Activated CD8-positive, alpha-beta T cell treated with anti-CD3 and anti-CD28 coated beads, Interleukin-2, amount 10 ng/mL, durations not matched to agents 7 days and 5 days (primary cell): ENCODE measurements at regions of chr20 and their contacts with region 1.

Region 1: DNA sequence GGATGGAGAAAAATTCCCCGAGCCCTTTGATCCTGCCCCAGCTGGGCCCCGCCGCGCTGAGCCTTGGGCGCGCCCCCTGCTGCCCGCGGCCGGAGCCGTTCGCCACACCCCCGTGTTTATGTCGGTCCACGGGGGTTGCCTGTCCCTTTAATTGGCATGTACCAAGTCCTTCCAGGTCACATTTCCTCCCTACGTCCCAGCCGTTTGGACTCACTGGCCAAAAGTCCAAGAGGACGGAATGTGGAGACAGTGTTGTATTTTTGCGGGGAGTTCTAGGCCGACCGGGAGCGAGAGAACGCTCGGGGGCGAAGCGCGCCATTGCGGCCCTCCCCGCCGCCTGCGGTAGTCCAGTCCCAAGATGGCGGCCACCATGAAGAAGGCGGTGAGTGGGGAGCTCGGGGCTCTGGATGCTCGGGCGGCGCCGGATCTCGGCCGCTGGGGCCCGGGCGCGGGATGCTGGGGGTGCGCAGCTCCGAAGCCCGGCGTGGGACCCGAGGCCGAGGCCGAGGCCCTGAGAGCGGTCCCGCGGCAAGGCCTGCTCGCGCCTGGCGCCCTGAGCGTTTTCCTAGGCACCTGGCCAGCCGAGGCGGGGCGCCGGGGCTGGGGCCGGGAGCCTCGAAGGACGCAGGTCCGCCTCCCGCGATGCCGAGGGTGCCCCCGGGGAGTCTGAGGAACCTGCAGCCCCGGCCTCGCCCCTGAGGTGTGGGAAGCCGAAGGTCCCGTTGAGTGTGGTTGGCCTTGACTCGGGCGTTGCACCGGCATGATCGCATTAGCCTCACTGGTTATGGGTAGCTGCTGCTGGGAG is at the start of gene PFDN4:
- DNase-seq: peak; percentile 84
- ATAC-seq: peak; percentile 95
- H3K4me3 Mint-ChIP-seq: peak within 1 kb of the TSS; percentile 93
- H3K27ac Mint-ChIP-seq: peak within 1 kb of the TSS; percentile 100
- H3K4me1 Mint-ChIP-seq: peaks cover 19% of the 10 kb centered on the region
- H3K27me3 Mint-ChIP-seq: peaks cover 5% of the 10 kb centered on the region
- total RNA-seq, gene PFDN4: 22.2 to 24.5 TPM

Region 2: GRCh38 chr20:54044156-54044555 is 163.8 kb before region 1 on chr20:
- CTCF ChIA-PET with region 1: no interaction called
- POLR2A ChIA-PET with region 1: no interaction called
- DNase-seq: no peak
- ATAC-seq: no peak
- H3K4me3 Mint-ChIP-seq: no peak overlapping the region
- H3K27ac Mint-ChIP-seq: no peak overlapping the region
- H3K4me1 Mint-ChIP-seq: peaks cover 11% of the 10 kb centered on the region
- H3K27me3 Mint-ChIP-seq: peaks cover 7% of the 10 kb centered on the region

Region 3: GRCh38 chr20:54093423-54094267 is 114.3 kb before region 1 on chr20:
- CTCF ChIA-PET with region 1: interaction called, 28 read pairs
- POLR2A ChIA-PET with region 1: interaction called, 5 read pairs
- DNase-seq: no peak
- ATAC-seq: no peak
- H3K4me3 Mint-ChIP-seq: no peak overlapping the region
- H3K27ac Mint-ChIP-seq: no peak overlapping the region
- H3K4me1 Mint-ChIP-seq: peaks cover 5% of the 10 kb centered on the region
- H3K27me3 Mint-ChIP-seq: peaks cover 13% of the 10 kb centered on the region

Region 4: DNA sequence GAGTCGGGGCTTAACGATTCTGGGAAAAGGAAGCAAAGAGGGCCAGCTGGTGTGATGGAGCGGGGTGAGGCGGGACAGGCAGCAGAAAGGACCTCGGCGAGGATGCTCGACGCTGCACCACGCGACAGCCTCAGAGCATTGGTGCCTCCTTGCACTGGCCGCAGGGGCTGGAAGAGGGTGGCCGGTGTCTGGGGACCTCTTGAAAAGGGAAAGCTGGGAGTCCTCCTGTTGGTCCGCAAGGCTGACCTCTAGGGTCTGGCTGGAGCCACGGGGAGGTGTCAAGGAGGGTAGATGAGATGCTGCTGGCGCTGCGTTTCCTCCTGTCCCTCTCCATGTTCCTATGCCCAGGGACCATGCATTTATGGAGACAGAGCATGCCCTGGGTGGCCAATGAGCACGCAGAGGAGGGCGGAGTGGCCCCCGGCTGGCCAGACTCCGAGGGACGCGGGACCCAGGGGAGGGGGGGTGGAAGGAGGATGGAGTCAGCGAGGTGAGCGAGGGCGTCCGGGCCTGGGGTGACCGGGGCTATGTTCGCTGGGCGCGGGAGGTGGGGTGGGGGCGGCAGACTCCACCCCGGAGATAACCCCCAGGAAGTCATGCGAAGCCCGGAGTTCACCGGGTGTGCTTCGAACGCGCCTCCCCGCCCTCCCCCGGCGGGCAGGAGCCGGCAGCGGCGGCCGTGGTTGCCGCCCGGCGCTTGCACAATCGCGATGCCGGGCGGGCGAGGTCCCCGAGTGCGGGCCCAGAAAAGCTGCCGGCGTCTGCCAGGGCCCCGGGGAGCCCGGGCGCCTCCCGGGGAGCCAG is 34.1 kb before region 1 on chr20 and contains the start of gene CYP24A1:
- CTCF ChIA-PET with region 1: no interaction called
- POLR2A ChIA-PET with region 1: no interaction called
- DNase-seq: no peak
- ATAC-seq: peak; percentile 33
- H3K4me3 Mint-ChIP-seq: peak within 1 kb of the TSS; percentile 38
- H3K27ac Mint-ChIP-seq: no peak within 1 kb of the TSS
- H3K4me1 Mint-ChIP-seq: peaks cover 17% of the 10 kb centered on the region
- H3K27me3 Mint-ChIP-seq: peaks cover 58% of the 10 kb centered on the region
- total RNA-seq, gene CYP24A1: not detected

Region 5: GRCh38 chr20:54219751-54220426 is 11.9 kb after region 1 on chr20:
- CTCF ChIA-PET with region 1: interaction called, 14 read pairs
- POLR2A ChIA-PET with region 1: interaction called, 10 read pairs
- DNase-seq: no peak
- ATAC-seq: no peak
- H3K4me3 Mint-ChIP-seq: no peak overlapping the region
- H3K27ac Mint-ChIP-seq: no peak overlapping the region
- H3K4me1 Mint-ChIP-seq: peaks cover 17% of the 10 kb centered on the region
- H3K27me3 Mint-ChIP-seq: no peaks in the 10 kb centered on the region

Region 6: GRCh38 chr20:54231036-54231435 is 23.1 kb after region 1 on chr20:
- CTCF ChIA-PET with region 1: no interaction called
- POLR2A ChIA-PET with region 1: no interaction called
- DNase-seq: no peak
- ATAC-seq: no peak
- H3K4me3 Mint-ChIP-seq: no peak overlapping the region
- H3K27ac Mint-ChIP-seq: no peak overlapping the region
- H3K4me1 Mint-ChIP-seq: peaks cover 4% of the 10 kb centered on the region
- H3K27me3 Mint-ChIP-seq: peaks cover 3% of the 10 kb centered on the region